ENCODE measurements at regions of chr1 and their contacts with region 1.

Region 1: DNA sequence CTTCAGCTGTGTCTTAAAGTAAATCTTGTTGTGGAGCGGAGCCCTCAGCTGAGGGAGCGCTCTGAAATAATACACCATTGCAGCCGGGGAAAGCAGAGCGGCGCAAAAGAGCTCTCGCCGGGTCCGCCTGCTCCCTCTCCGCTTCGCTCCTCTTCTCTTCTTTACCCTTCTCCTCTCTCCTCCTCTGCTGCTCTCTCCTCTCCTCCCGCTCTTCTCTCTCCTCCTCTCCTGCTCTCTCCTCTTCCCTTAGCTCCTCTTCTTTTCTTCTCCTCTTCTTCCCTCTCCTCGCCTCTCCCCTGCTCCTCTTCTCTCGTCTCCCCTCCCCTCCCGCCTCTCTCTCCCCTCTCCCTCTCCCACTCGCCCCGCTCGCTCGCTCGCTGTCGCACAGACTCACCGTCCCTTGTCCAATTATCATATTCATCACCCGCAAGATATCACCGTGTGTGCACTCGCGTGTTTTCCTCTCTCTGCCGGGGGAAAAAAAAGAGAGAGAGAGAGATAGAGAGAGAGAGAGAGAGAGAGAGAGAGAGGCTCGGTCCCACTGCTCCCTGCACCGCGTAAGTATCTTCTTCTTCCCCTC is at the start of gene PROX1:
- DNase-seq: peak in 2 of 5 donors; percentile 37 to 44
- ATAC-seq: peak; percentile 73 to 88 (median 85)
- H3K4me3 ChIP-seq: peak within 1 kb of the TSS; percentile 42 to 83 (median 64)
- H3K27ac ChIP-seq: peak within 1 kb of the TSS; percentile 56 to 94 (median 88)
- H3K4me1 ChIP-seq: peaks cover 0 to 27% (median 8%) of the 10 kb centered on the region in 12 donors
- H3K27me3 ChIP-seq: peaks cover 2 to 56% (median 36%) of the 10 kb centered on the region in 9 donors
- CTCF ChIP-seq: peak in 3 of 12 donors; percentile 8 to 24 (median 12)
- POLR2A ChIP-seq: peak; percentile 68 to 84
- total RNA-seq, gene PROX1: 44.6 to 145 (median 96.4) TPM

Region 2: GRCh38 chr1:213244664-213245091 is 743.3 kb before region 1 on chr1:
- intact Hi-C with region 1: loop called in 1 of 10 experiments (anchors 10 kb)
- DNase-seq: peak in 1 of 5 donors; percentile 29
- ATAC-seq: no peak
- H3K4me3 ChIP-seq: no peak overlapping the region
- H3K27ac ChIP-seq: no peak overlapping the region
- H3K4me1 ChIP-seq: no peaks in the 10 kb centered on the region
- H3K27me3 ChIP-seq: no peaks in the 10 kb centered on the region
- CTCF ChIP-seq: peak; percentile 71 to 88 (median 79)
- POLR2A ChIP-seq: no peak

Region 3: GRCh38 chr1:213381572-213382084 is 606.4 kb before region 1 on chr1:
- intact Hi-C with region 1: loop called in 5 of 10 experiments (anchors 2 to 10 kb)
- DNase-seq: peak in 4 of 5 donors; percentile 37 to 68 (median 50)
- ATAC-seq: peak; percentile 90 to 97 (median 95)
- H3K4me3 ChIP-seq: peak overlapping the region in 6 of 12 donors; percentile 7 to 36 (median 12)
- H3K27ac ChIP-seq: peak overlapping the region in 1 of 12 donors; percentile 3
- H3K4me1 ChIP-seq: peaks cover 0 to 10% (median 0%) of the 10 kb centered on the region in 12 donors
- H3K27me3 ChIP-seq: no peaks in the 10 kb centered on the region
- CTCF ChIP-seq: no peak
- POLR2A ChIP-seq: no peak

Region 4: DNA sequence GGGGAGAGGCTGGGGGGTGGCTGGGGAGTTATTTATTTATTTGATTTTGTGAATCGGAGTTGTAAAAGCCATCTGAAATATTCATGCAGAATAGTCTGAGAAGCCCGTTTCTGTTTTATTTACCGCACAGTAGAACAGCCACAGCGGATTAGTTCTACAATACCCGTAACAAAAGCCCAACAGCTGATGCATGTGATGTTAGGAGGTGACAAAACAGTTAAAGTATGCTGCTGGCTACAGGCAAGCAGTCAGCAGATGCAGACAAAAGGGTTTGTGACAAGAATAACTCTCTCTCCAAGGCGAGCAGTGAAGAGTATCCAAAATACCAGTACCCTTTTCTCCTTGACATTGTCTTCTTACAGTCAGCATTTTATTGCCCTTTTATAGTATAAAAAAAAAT is 41.8 kb after region 1 on chr1:
- intact Hi-C with region 1: loop called in 4 of 10 experiments (anchors 2 to 5 kb)
- DNase-seq: peak in 2 of 5 donors; percentile 30 to 35
- ATAC-seq: peak; percentile 77 to 89 (median 85)
- H3K4me3 ChIP-seq: no peak overlapping the region
- H3K27ac ChIP-seq: peak overlapping the region; percentile 77 to 97 (median 92)
- H3K4me1 ChIP-seq: peaks cover 0 to 49% (median 7%) of the 10 kb centered on the region in 12 donors
- H3K27me3 ChIP-seq: no peaks in the 10 kb centered on the region
- CTCF ChIP-seq: no peak
- POLR2A ChIP-seq: no peak

Region 5: GRCh38 chr1:214116258-214116657 is 128.2 kb after region 1 on chr1:
- intact Hi-C with region 1: loop called in 8 of 10 experiments (anchors 5 to 10 kb)
- DNase-seq: no peak
- ATAC-seq: no peak
- H3K4me3 ChIP-seq: no peak overlapping the region
- H3K27ac ChIP-seq: no peak overlapping the region
- H3K4me1 ChIP-seq: no peaks in the 10 kb centered on the region
- H3K27me3 ChIP-seq: no peaks in the 10 kb centered on the region
- CTCF ChIP-seq: no peak
- POLR2A ChIP-seq: no peak